ENCODE measurements at regions of chr1 and their contacts with region 1.

Region 1: GRCh38 chr1:231866392-231867331 is 240.1 kb downstream of the DISC1 start:
- DNase-seq: peak; percentile 54
- H3K4me3 ChIP-seq: no peak overlapping the region
- H3K27ac ChIP-seq: no peak overlapping the region
- H3K4me1 ChIP-seq: no peaks in the 10 kb centered on the region
- H3K27me3 ChIP-seq: no peaks in the 10 kb centered on the region
- CTCF ChIP-seq: peak; percentile 68

Region 2: DNA sequence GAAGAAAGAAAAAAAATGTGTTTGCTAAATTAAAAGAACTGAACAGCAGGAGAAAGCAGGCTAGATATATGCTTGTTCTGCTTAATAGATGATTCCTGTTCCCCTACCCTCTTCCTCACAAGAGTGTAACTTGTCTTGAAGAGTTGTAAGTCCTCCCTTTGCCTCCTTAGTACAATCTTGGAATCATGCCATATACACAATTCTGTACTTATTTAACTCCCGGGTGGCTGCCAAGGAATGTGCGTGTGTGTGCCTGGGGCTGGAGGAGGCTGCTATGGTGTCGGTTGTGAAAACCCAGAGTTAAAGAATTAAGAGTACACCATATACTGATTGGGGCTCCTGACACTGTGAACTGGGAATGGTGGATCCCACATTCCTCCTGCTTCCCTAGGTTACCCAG is 569.1 kb after region 1 on chr1:
- intact Hi-C with region 1: loop called (anchors 10 kb)
- DNase-seq: no peak
- H3K4me3 ChIP-seq: no peak overlapping the region
- H3K27ac ChIP-seq: no peak overlapping the region
- H3K4me1 ChIP-seq: no peaks in the 10 kb centered on the region
- H3K27me3 ChIP-seq: no peaks in the 10 kb centered on the region
- CTCF ChIP-seq: no peak

Region 3: GRCh38 chr1:232599178-232600041 is 732.7 kb after region 1 on chr1:
- intact Hi-C with region 1: loop called (anchors 10 kb)
- DNase-seq: no peak
- H3K4me3 ChIP-seq: no peak overlapping the region
- H3K27ac ChIP-seq: no peak overlapping the region
- H3K4me1 ChIP-seq: no peaks in the 10 kb centered on the region
- H3K27me3 ChIP-seq: no peaks in the 10 kb centered on the region
- CTCF ChIP-seq: no peak

Region 4: DNA sequence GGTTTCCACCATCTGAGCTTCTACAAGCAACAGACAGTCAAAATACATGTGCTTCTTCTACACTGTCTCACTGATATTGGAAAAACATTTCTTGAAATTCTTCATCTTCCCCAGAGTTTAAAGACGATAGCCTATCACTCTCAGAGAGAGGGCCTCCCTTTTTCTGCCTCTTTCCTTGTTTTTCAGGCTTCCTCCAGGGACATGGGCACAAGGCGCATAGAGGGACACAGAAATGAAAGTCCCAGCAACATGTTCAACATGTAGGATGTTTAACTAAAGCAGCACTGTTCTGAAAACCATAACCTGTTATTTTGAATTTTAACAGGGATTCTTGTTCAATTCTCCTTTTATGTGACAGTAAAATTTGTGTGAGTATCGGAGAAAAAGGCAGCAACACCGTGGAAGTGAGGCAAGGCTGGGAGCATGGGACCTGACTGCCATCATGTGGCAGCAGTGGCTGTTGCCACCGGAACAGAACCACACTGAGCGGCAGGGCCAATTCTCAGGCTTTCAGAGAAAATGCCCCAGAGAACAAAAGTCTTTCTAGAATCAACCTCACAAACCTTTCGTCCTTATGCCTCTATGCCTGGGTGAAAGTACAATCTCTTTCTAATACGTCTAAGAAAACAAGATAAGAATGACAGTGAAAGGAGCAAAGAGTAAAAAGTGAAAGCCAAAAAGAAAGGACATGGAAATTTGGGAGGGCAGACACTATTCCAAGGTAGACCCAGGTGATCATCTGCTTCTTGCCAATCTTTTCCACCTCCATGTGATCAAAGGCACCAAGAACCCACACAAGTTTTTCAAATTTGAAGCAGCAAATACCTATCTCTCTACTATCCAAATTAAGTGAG is 1374.4 kb after region 1 on chr1:
- intact Hi-C with region 1: loop called (anchors 10 kb)
- DNase-seq: peak; percentile 76
- H3K4me3 ChIP-seq: no peak overlapping the region
- H3K27ac ChIP-seq: peak overlapping the region; percentile 83
- H3K4me1 ChIP-seq: peaks cover 7% of the 10 kb centered on the region
- H3K27me3 ChIP-seq: no peaks in the 10 kb centered on the region
- CTCF ChIP-seq: peak; percentile 76